ENCODE measurements at regions of chr2 and their contacts with region 1.

Region 1: GRCh38 chr2:222038067-222038802 is 260.6 kb downstream of the PAX3 start:
- DNase-seq: no peak
- H3K4me3 Mint-ChIP-seq: no peak overlapping the region
- H3K27ac Mint-ChIP-seq: no peak overlapping the region
- H3K4me1 Mint-ChIP-seq: no peaks in the 10 kb centered on the region
- H3K27me3 Mint-ChIP-seq: peaks cover 6% of the 10 kb centered on the region

Region 2: GRCh38 chr2:222024932-222025880 is 13.0 kb before region 1 on chr2:
- CTCF ChIA-PET with region 1: interaction called, 12 read pairs
- POLR2A ChIA-PET with region 1: no interaction called
- DNase-seq: no peak
- H3K4me3 Mint-ChIP-seq: no peak overlapping the region
- H3K27ac Mint-ChIP-seq: no peak overlapping the region
- H3K4me1 Mint-ChIP-seq: no peaks in the 10 kb centered on the region
- H3K27me3 Mint-ChIP-seq: peaks cover 7% of the 10 kb centered on the region

Region 3: GRCh38 chr2:222054813-222055212 is 16.6 kb after region 1 on chr2:
- CTCF ChIA-PET with region 1: no interaction called
- POLR2A ChIA-PET with region 1: no interaction called
- DNase-seq: no peak
- H3K4me3 Mint-ChIP-seq: no peak overlapping the region
- H3K27ac Mint-ChIP-seq: no peak overlapping the region
- H3K4me1 Mint-ChIP-seq: no peaks in the 10 kb centered on the region
- H3K27me3 Mint-ChIP-seq: peaks cover 19% of the 10 kb centered on the region

Measured in activated CD4-positive, alpha-beta memory T cell treated with anti-CD3 and anti-CD28 coated beads, Interleukin-2, amount 10 ng/mL, durations not matched to agents 7 days and 5 days (primary cell).